PC-3 (cell line): ENCODE measurements at regions of chr6 and their contacts with region 1.

Region 1: GRCh38 chr6:12150812-12151432 is 138.8 kb downstream of the HIVEP1 start:
- DNase-seq: peak; percentile 72
- ATAC-seq: peak; percentile 35; the same call in 1 of the 2 replicates
- H3K4me3 ChIP-seq: no peak overlapping the region
- H3K27ac ChIP-seq: peak overlapping the region; percentile 80
- H3K4me1 ChIP-seq: peaks cover 41% of the 10 kb centered on the region
- H3K27me3 ChIP-seq: no peaks in the 10 kb centered on the region
- CTCF ChIP-seq: peak; percentile 94

Region 2: DNA sequence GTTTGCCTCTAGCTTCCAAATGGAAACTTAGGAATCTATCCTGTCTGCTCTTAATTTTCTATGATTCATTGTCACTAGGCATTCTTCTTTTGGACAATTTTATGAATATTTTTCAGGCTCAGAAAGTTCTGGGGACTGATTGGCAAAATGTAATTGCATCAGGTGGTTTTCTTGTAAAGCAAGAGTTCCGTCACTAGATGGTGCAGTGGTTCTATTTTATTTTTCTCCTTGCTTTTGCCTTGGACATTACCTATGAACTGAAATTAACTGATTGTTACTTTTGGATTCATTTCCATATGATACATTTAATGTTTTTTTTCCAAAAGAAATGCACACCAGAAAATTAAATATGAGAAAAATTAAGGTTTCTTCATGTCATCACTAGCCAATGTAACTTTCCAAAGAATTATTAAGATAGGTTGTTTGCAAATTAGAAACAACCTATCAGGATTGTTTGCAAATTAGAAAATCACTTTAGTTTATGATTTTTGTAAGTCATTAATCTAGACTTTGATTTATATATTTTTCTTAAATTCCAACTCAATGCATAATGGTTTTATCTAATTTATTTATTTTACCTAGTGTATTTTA is 565.4 kb before region 1 on chr6:
- CTCF ChIA-PET with region 1: no interaction called
- POLR2A ChIA-PET with region 1: no interaction called
- intact Hi-C with region 1: loop called (anchors 2 kb)
- DNase-seq: peak; percentile 80
- ATAC-seq: peak; percentile 29; the same call in 1 of the 2 replicates
- H3K4me3 ChIP-seq: no peak overlapping the region
- H3K27ac ChIP-seq: no peak overlapping the region
- H3K4me1 ChIP-seq: peaks cover 11% of the 10 kb centered on the region
- H3K27me3 ChIP-seq: no peaks in the 10 kb centered on the region
- CTCF ChIP-seq: peak; percentile 83

Region 3: GRCh38 chr6:12060780-12061619 is 89.9 kb before region 1 on chr6:
- CTCF ChIA-PET with region 1: no interaction called
- POLR2A ChIA-PET with region 1: no interaction called
- intact Hi-C with region 1: no loop called
- DNase-seq: no peak
- ATAC-seq: no peak
- H3K4me3 ChIP-seq: no peak overlapping the region
- H3K27ac ChIP-seq: no peak overlapping the region
- H3K4me1 ChIP-seq: peaks cover 12% of the 10 kb centered on the region; the same call in 1 of the 2 replicates
- H3K27me3 ChIP-seq: no peaks in the 10 kb centered on the region
- CTCF ChIP-seq: no peak

Region 4: GRCh38 chr6:12075067-12075563 is 75.8 kb before region 1 on chr6:
- CTCF ChIA-PET with region 1: no interaction called
- POLR2A ChIA-PET with region 1: no interaction called
- intact Hi-C with region 1: loop called (anchors 5 kb)
- DNase-seq: peak; percentile 10
- ATAC-seq: no peak
- H3K4me3 ChIP-seq: no peak overlapping the region
- H3K27ac ChIP-seq: no peak overlapping the region
- H3K4me1 ChIP-seq: peaks cover 27% of the 10 kb centered on the region
- H3K27me3 ChIP-seq: no peaks in the 10 kb centered on the region
- CTCF ChIP-seq: peak; percentile 62

Region 5: DNA sequence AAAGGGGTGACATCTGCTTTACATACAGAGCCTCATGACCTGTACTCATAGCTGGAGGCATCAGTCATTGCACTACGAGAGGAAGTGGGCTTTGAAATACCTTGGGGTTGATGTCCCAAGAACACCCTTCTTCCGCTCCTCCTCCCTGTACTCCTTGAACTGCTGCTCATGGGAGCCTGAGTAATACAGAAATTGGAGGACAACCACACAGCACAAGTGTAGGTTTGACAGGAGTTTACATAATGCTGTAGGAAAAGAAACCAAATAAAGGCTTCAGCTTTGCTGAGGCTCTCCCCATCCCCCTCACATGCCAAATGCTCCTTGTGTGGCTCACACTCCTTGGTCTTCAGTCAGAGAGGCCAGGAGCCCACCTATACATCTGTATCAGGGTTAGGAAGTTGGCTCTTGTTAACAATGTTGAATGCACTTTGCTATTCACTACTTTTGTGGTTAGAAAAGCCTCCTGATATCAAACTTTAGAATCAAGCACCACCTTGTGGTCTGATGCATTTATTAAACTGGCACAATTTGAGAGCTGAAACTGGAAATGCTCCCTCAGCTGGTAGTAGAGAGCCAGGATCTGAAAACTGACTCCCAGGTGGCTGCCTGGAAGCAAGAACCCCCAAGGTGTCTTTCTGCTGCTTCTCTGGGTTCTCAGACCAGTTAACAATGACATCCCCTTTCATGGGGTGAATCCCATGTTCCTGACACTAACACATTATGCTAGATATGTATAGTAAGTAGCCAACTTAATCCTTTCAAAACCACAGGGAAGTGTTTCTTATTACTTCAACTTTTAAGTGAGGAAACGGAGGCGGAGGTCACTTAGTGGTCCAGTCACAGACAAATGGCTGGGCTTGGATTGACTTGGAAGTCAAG is 83.0 kb after region 1 on chr6:
- CTCF ChIA-PET with region 1: interaction called, 3 read pairs
- POLR2A ChIA-PET with region 1: no interaction called
- intact Hi-C with region 1: loop called (anchors 1 kb)
- DNase-seq: peak; percentile 90
- ATAC-seq: peak; percentile 94
- H3K4me3 ChIP-seq: no peak overlapping the region
- H3K27ac ChIP-seq: no peak overlapping the region
- H3K4me1 ChIP-seq: peaks cover 10% of the 10 kb centered on the region
- H3K27me3 ChIP-seq: no peaks in the 10 kb centered on the region
- CTCF ChIP-seq: peak; percentile 97

Region 6: DNA sequence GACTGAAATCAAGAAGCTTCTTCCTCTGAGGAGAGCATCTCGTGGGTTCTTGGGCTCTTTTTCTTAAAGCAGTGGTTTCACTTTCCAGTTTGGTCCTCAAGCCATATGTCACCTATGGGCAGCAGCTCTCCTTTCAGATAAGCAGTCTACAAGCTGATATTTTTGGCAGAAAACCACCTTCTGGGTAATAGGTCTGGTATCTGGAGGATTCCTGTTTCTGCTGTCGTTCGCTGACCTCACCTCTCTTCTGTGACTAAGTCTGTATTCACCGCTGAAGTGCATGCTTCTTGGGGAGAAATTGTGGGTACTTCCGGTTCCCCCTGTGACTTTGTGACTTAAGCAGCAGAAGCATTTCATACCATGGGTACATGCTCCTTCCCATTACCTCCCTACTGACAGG is 332.8 kb after region 1 on chr6:
- CTCF ChIA-PET with region 1: no interaction called
- POLR2A ChIA-PET with region 1: no interaction called
- intact Hi-C with region 1: loop called (anchors 10 kb)
- DNase-seq: peak; percentile 98
- ATAC-seq: peak; percentile 89
- H3K4me3 ChIP-seq: peak overlapping the region; percentile 47
- H3K27ac ChIP-seq: peak overlapping the region; percentile 80
- H3K4me1 ChIP-seq: peaks cover 35% of the 10 kb centered on the region
- H3K27me3 ChIP-seq: no peaks in the 10 kb centered on the region
- CTCF ChIP-seq: no peak